Calu3 (cell line): ENCODE measurements at regions of chr16 and their contacts with region 1.

Region 1: DNA sequence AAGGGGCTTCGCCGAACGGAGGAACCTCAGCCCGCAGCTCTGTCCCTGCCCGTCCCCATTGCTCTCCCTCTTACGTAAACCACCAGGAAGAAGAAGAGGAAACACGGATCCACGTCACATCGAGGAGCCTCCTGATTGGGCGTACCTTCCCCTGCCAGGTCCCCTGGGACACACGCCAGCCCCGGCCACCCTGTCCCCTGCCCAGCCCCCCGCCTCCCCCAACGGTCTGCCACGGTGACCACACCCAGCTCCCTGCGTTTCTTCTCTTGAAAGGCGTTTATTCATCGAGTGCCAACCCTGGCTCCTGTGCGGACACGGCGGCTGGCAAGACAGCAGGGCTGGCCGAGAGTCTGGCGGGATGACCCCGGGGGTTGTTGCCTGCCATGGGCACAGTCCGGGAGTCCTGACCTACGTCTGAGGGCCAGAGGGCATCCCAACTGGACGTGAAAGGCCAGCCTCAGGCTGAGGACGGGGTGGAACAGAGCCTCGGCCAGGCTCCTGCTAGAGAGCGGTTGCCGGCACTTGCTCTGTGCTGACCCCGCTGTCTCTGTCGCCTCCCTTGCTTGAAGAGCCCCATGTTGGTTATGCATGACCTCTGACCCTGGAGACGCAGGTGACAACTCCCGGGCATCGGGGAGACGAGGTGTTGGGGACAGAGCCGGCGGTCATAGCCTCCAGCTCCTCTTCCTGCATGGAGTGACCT is 40.6 kb upstream of the ACSF3 start:
- DNase-seq: peak; percentile 95
- H3K4me3 Mint-ChIP-seq: peak overlapping the region; percentile 72
- H3K27ac Mint-ChIP-seq: peak overlapping the region; percentile 63
- H3K4me1 Mint-ChIP-seq: peaks cover 10% of the 10 kb centered on the region
- H3K27me3 Mint-ChIP-seq: peaks cover 71% of the 10 kb centered on the region
- CTCF ChIP-seq: no peak

Region 2: GRCh38 chr16:89171463-89172170 is 118.6 kb after region 1 on chr16 and contains the start of gene CDH15:
- CTCF ChIA-PET with region 1: interaction called, 11 read pairs
- intact Hi-C with region 1: no loop called
- DNase-seq: peak; percentile 99
- H3K4me3 Mint-ChIP-seq: peak within 1 kb of the TSS; percentile 71
- H3K27ac Mint-ChIP-seq: peak within 1 kb of the TSS; percentile 48
- H3K4me1 Mint-ChIP-seq: peaks cover 10% of the 10 kb centered on the region
- H3K27me3 Mint-ChIP-seq: peaks cover 68% of the 10 kb centered on the region
- CTCF ChIP-seq: no peak
- total RNA-seq, gene CDH15: not detected in 2 replicates